CD4-positive, alpha-beta T cell (primary cell): ENCODE measurements at regions of chr17 and their contacts with region 1.

Region 1: GRCh38 chr17:75784473-75785015 is at the start of gene UNK:
- DNase-seq: peak; percentile 90 to 99 (median 94)
- ATAC-seq: peak; percentile 63
- H3K4me3 ChIP-seq: peak within 1 kb of the TSS; percentile 69
- H3K4me3 Mint-ChIP-seq: peak within 1 kb of the TSS; percentile 92
- H3K27ac ChIP-seq: peak within 1 kb of the TSS; percentile 99 to 100
- H3K27ac Mint-ChIP-seq: peak within 1 kb of the TSS; percentile 93
- H3K4me1 ChIP-seq: peaks cover 45% of the 10 kb centered on the region
- H3K4me1 Mint-ChIP-seq: peaks cover 52% of the 10 kb centered on the region
- H3K27me3 ChIP-seq: no peaks in the 10 kb centered on the region
- H3K27me3 Mint-ChIP-seq: peaks cover 3% of the 10 kb centered on the region
- CTCF ChIP-seq: no peak
- total RNA-seq, gene UNK: 33.7 to 36.1 TPM

Region 2: DNA sequence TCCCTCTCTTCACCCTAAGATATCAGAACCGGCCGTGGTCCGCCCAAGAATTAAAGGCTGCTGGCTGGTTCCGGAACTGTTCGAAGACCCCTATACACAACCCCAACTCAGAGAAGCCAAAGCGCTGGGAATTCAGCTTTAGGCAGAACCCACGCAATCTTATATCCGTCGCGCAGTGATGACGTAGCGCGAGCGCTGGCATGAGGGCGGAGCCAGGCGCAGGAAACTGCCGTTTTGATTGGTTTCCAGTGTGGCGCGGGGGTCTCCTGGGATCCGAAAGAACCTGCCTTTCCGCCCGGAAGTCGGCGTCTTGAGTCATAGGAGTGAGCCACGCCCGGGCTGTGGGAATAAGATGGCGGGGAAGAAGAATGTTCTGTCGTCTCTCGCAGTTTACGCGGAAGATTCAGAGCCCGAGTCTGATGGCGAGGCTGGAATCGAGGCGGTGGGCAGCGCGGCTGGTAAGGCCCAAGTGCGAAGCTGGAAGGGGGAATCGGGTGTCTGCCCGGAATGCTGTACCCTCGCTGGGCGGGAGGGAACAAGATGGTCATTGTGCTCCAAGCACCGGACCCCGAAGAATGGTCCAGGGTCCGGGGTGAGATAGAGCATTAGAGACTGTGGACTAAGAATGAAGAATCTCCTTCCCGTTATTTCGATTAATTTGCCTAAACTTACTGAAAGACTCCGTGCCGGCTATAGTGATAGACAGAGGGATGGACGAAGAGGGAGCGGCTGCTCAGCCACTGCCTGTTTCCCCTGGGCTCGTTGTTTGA is 117.3 kb before region 1 on chr17 and contains the starts of genes RECQL5 and SAP30BP:
- CTCF ChIA-PET with region 1: interaction called, 3 read pairs
- POLR2A ChIA-PET with region 1: interaction called, 18 read pairs
- intact Hi-C with region 1: no loop called
- DNase-seq: peak; percentile 97 to 99 (median 98)
- ATAC-seq: peak; percentile 100
- H3K4me3 ChIP-seq: peak within 1 kb of the TSS; percentile 76
- H3K4me3 Mint-ChIP-seq: peak within 1 kb of the TSS; percentile 72
- H3K27ac ChIP-seq: peak within 1 kb of the TSS; percentile 87 to 90
- H3K27ac Mint-ChIP-seq: peak within 1 kb of the TSS; percentile 57
- H3K4me1 ChIP-seq: peaks cover 23% of the 10 kb centered on the region
- H3K4me1 Mint-ChIP-seq: peaks cover 26% of the 10 kb centered on the region
- H3K27me3 ChIP-seq: no peaks in the 10 kb centered on the region
- H3K27me3 Mint-ChIP-seq: no peaks in the 10 kb centered on the region
- CTCF ChIP-seq: no peak
- total RNA-seq, gene RECQL5: 16.4 to 17.7 TPM
- total RNA-seq, gene SAP30BP: 209 to 227 TPM

Region 3: DNA sequence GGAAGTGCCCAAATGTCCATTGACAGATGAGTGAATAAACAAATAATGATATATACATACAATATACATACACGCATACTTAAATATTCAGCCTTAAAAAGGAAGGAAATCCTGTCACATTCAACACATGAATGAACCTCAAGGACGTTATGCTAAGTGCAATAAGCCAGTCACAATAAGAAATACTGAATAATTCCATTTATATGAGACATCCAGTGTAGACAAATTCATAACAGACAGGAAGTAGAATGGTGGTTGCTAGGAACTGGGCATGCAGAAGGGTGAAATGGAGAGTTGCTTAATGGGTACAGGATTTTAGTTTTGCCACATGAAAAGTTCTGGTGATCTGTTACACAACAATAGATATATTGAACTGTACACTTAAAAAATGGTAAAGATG is 72.1 kb before region 1 on chr17:
- CTCF ChIA-PET with region 1: no interaction called
- POLR2A ChIA-PET with region 1: no interaction called
- intact Hi-C with region 1: no loop called
- DNase-seq: no peak
- ATAC-seq: no peak
- H3K4me3 ChIP-seq: no peak overlapping the region
- H3K4me3 Mint-ChIP-seq: no peak overlapping the region
- H3K27ac ChIP-seq: no peak overlapping the region
- H3K27ac Mint-ChIP-seq: no peak overlapping the region
- H3K4me1 ChIP-seq: no peaks in the 10 kb centered on the region
- H3K4me1 Mint-ChIP-seq: no peaks in the 10 kb centered on the region
- H3K27me3 ChIP-seq: no peaks in the 10 kb centered on the region
- H3K27me3 Mint-ChIP-seq: peaks cover 12% of the 10 kb centered on the region
- CTCF ChIP-seq: no peak

Region 4: GRCh38 chr17:75795820-75796607 is 11.5 kb after region 1 on chr17:
- CTCF ChIA-PET with region 1: interaction called, 3 read pairs
- POLR2A ChIA-PET with region 1: interaction called, 21 read pairs
- intact Hi-C with region 1: no loop called
- DNase-seq: no peak
- ATAC-seq: no peak
- H3K4me3 ChIP-seq: no peak overlapping the region
- H3K4me3 Mint-ChIP-seq: no peak overlapping the region
- H3K27ac ChIP-seq: no peak overlapping the region
- H3K27ac Mint-ChIP-seq: no peak overlapping the region
- H3K4me1 ChIP-seq: no peaks in the 10 kb centered on the region
- H3K4me1 Mint-ChIP-seq: peaks cover 23% of the 10 kb centered on the region
- H3K27me3 ChIP-seq: no peaks in the 10 kb centered on the region
- H3K27me3 Mint-ChIP-seq: no peaks in the 10 kb centered on the region
- CTCF ChIP-seq: no peak

Region 5: GRCh38 chr17:75827252-75828115 is 42.9 kb after region 1 on chr17:
- CTCF ChIA-PET with region 1: interaction called, 6 read pairs
- POLR2A ChIA-PET with region 1: interaction called, 36 read pairs
- intact Hi-C with region 1: loop called (anchors 2 to 5 kb)
- DNase-seq: peak; percentile 30 to 85 (median 61)
- ATAC-seq: peak; percentile 76
- H3K4me3 ChIP-seq: peak overlapping the region; percentile 32
- H3K4me3 Mint-ChIP-seq: peak overlapping the region; percentile 34
- H3K27ac ChIP-seq: peak overlapping the region; percentile 39 to 46
- H3K27ac Mint-ChIP-seq: peak overlapping the region; percentile 86
- H3K4me1 ChIP-seq: peaks cover 46% of the 10 kb centered on the region
- H3K4me1 Mint-ChIP-seq: peaks cover 17% of the 10 kb centered on the region
- H3K27me3 ChIP-seq: no peaks in the 10 kb centered on the region
- H3K27me3 Mint-ChIP-seq: no peaks in the 10 kb centered on the region
- CTCF ChIP-seq: peak; percentile 84

Region 6: DNA sequence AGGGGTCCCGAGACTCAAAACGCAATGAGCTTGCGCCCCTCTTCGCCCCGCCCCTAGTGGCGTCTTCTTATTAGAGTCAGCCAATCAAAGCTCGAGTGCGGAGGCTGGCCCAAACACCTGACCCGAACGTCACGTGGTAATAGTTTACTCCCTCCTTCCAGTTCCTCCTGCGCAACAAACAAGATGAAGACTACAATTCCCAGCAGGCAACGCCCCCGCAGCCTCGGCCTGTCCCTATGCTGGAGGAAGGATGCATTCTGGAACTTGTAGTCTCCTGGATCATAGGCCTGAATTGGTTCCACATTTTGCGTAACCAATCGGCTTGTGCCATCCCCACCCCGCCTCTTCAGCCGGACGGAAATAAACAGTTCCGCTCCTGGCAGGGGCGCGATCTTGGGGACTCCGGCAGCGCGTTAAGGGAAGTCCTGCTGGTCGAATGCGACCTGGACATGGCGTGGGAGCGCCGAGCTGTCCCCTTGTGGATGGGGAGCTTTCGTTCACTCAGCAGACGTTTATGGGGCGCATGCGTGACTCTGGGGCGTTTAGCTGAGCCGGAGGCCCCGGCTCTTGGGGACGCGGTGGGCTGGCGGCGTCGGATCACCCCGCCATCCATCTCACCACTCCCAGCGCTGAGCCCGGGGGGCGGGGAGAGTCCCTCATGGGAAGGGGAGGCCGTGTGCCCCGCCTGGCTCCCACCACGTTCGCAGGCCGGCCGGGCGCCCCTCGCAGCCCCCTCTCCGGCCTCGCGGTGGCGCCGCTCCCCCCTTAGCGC is 71.0 kb after region 1 on chr17 and contains the start of gene WBP2:
- CTCF ChIA-PET with region 1: interaction called, 9 read pairs
- POLR2A ChIA-PET with region 1: interaction called, 128 read pairs
- intact Hi-C with region 1: loop called (anchors 1 to 2 kb)
- DNase-seq: peak; percentile 92 to 100 (median 95)
- ATAC-seq: peak; percentile 91
- H3K4me3 ChIP-seq: peak within 1 kb of the TSS; percentile 82
- H3K4me3 Mint-ChIP-seq: peak within 1 kb of the TSS; percentile 90
- H3K27ac ChIP-seq: peak within 1 kb of the TSS; percentile 87 to 90
- H3K27ac Mint-ChIP-seq: no peak within 1 kb of the TSS
- H3K4me1 ChIP-seq: peaks cover 45% of the 10 kb centered on the region
- H3K4me1 Mint-ChIP-seq: peaks cover 29% of the 10 kb centered on the region
- H3K27me3 ChIP-seq: no peaks in the 10 kb centered on the region
- H3K27me3 Mint-ChIP-seq: no peaks in the 10 kb centered on the region
- CTCF ChIP-seq: peak; percentile 53
- total RNA-seq, gene WBP2: 98.5 to 114 TPM

Region 7: DNA sequence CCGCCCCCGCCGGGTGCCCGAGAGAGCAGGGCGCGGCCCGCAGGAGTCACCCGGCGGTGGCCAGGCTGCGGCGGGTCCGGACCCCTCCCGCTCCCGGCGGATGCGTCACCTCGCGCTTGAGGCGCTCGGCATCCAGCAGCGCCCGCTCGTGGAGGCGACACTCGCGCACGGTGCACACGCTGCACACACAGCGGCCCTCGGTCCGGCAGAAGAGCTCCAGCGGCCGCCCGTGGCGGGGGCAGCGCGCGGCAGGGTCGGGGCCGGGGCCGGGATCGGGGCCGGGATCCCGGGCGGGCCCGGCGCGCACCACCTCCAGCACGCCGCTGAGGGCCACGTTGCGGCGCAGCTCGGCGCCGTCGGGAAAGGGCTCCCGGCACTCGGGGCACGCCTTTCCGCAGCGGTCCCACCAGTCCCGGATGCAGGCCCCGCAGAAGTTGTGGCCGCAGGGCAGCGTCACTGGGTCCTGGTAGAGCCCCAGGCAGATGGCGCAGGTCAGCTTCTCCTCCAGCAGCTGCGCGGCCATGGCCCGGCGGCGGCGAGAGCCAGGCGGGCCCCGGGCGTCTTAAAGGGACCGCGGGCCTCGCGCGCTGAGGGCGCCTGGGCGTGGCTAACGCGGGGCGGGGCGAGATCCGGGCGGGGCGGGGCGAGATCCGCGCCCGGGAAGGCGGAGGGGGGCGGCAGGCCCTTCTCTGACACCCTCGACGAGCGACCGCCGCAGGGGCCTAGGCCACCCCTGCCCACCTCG is 112.0 kb after region 1 on chr17 and contains the start of gene TRIM65:
- CTCF ChIA-PET with region 1: interaction called, 5 read pairs
- POLR2A ChIA-PET with region 1: interaction called, 21 read pairs
- intact Hi-C with region 1: loop called in 1 of 2 experiments (anchors 2 kb)
- DNase-seq: peak; percentile 55 to 91 (median 74)
- ATAC-seq: peak; percentile 85
- H3K4me3 ChIP-seq: peak within 1 kb of the TSS; percentile 57
- H3K4me3 Mint-ChIP-seq: peak within 1 kb of the TSS; percentile 88
- H3K27ac ChIP-seq: peak within 1 kb of the TSS in 1 of 2 donors; percentile 29
- H3K27ac Mint-ChIP-seq: peak within 1 kb of the TSS; percentile 78
- H3K4me1 ChIP-seq: peaks cover 33% of the 10 kb centered on the region
- H3K4me1 Mint-ChIP-seq: peaks cover 25% of the 10 kb centered on the region
- H3K27me3 ChIP-seq: no peaks in the 10 kb centered on the region
- H3K27me3 Mint-ChIP-seq: no peaks in the 10 kb centered on the region
- CTCF ChIP-seq: peak; percentile 33
- total RNA-seq, gene TRIM65: 9.9 to 11.7 TPM

Region 8: DNA sequence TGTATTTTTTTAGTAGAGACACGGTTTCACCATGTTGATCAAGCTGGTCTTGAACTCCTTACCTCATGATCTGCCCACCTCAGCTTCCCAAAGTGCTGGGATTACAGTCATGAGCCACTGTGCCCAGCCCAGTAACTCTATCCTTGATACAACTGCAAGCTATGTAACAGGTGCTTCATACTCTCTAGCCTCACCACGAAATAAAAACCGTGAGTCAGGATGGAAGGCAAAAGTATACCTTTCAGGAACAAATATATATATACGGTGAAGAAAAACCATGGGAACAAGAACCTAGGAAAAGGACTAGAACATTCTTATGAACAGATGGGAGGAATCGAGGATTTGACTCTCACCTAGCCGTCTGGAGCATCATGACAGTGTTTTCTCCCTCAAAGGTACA is 165.9 kb after region 1 on chr17:
- CTCF ChIA-PET with region 1: no interaction called
- POLR2A ChIA-PET with region 1: no interaction called
- intact Hi-C with region 1: no loop called
- DNase-seq: no peak
- ATAC-seq: no peak
- H3K4me3 ChIP-seq: no peak overlapping the region
- H3K4me3 Mint-ChIP-seq: no peak overlapping the region
- H3K27ac ChIP-seq: no peak overlapping the region
- H3K27ac Mint-ChIP-seq: no peak overlapping the region
- H3K4me1 ChIP-seq: no peaks in the 10 kb centered on the region
- H3K4me1 Mint-ChIP-seq: no peaks in the 10 kb centered on the region
- H3K27me3 ChIP-seq: no peaks in the 10 kb centered on the region
- H3K27me3 Mint-ChIP-seq: no peaks in the 10 kb centered on the region
- CTCF ChIP-seq: no peak